HEK293T (cell line): ENCODE measurements at regions of chr20 and their contacts with region 1.

Region 1: DNA sequence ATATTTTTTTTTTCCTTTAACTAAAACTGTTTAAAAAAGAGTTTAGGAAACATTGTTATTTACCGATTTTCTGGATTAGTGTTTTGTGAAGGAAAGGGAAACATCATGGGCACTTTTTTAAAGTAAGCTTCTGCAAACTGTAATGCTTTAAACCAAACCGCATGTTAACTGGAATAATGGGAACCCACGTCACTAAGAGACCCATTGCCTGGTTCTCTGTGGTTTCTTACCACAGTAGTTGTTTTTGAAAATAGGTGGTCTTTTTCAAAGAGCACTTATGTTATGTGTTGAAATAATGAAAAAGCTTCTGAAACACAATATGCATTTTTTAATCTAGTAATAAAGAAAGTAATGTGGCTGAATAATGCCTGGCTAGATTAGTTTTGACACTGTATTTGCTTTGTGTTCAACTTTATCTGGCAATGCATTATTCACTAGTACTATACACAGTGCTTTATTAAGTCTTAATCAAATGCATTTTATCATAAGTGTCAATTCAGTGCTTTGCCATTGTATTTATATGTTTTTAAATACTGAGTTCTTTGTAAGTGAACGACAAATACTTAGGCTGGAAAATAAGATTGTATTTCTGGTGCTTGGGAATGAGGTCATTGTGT is 754.1 kb upstream of the FLRT3 start:
- DNase-seq: no peak

Region 2: DNA sequence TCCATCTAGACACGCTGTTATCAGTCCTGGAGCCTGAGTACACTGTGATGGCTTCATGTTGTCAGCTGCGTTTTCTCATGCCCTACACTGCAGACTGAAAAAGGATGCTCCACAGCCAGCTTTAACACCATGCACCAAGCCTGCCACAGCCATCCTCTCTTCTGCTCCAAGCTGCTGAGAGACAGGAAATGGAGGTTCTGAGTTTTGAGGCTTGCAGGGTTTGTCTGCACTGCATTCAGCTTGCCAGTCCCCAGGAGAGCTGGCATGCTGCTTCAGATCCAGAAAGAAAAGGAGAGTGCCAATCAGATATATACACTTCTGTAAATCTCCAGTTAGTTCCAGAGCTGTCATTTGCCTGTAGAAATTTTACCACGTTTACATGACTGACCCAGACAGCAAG is 203.4 kb before region 1 on chr20:
- CTCF ChIA-PET with region 1: no interaction called
- POLR2A ChIA-PET with region 1: no interaction called
- DNase-seq: no peak

Region 3: GRCh38 chr20:15632680-15633079 is 541.2 kb after region 1 on chr20:
- CTCF ChIA-PET with region 1: interaction called, 11 read pairs
- POLR2A ChIA-PET with region 1: no interaction called
- DNase-seq: no peak